PC-3 (cell line): ENCODE measurements at regions of chr4 and their contacts with region 1.

Region 1: GRCh38 chr4:129526814-129527213 is 430.9 kb downstream of the C4orf33 start:
- DNase-seq: peak; percentile 37
- ATAC-seq: peak; percentile 40; the same call in 1 of the 2 replicates
- H3K4me3 ChIP-seq: no peak overlapping the region
- H3K27ac ChIP-seq: no peak overlapping the region
- H3K4me1 ChIP-seq: no peaks in the 10 kb centered on the region
- H3K27me3 ChIP-seq: peaks cover 5% of the 10 kb centered on the region; the same call in 1 of the 2 replicates
- CTCF ChIP-seq: peak; percentile 50

Region 2: DNA sequence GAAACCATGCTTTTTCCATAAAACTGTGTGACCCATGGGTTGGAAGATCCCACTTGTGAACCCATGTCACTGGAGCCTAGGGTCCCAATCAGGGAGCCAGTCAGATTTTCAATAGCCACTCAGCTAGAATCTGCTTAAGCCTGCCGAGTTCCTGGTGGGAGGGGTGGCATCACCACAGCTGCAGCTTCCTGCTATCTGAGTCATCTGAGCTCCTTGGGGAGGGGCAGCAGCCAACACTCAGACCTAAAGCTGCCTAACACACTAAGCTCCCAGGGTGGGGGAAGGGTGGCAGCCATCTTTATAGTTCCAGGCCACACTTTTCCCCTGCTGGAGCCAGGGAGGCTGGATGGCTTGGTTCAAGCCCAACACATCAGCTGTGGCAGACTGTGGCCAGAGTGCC is 80.7 kb before region 1 on chr4:
- CTCF ChIA-PET with region 1: no interaction called
- POLR2A ChIA-PET with region 1: no interaction called
- intact Hi-C with region 1: no loop called
- DNase-seq: no peak
- ATAC-seq: no peak
- H3K4me3 ChIP-seq: no peak overlapping the region
- H3K27ac ChIP-seq: no peak overlapping the region
- H3K4me1 ChIP-seq: no peaks in the 10 kb centered on the region
- H3K27me3 ChIP-seq: no peaks in the 10 kb centered on the region
- CTCF ChIP-seq: no peak

Region 3: GRCh38 chr4:129641179-129641578 is 114.4 kb after region 1 on chr4:
- CTCF ChIA-PET with region 1: no interaction called
- POLR2A ChIA-PET with region 1: no interaction called
- intact Hi-C with region 1: loop called (anchors 2 kb)
- DNase-seq: peak; percentile 67
- ATAC-seq: peak; percentile 31; the same call in 1 of the 2 replicates
- H3K4me3 ChIP-seq: no peak overlapping the region
- H3K27ac ChIP-seq: no peak overlapping the region
- H3K4me1 ChIP-seq: no peaks in the 10 kb centered on the region
- H3K27me3 ChIP-seq: no peaks in the 10 kb centered on the region
- CTCF ChIP-seq: peak; percentile 75

Region 4: GRCh38 chr4:129929052-129929451 is 402.2 kb after region 1 on chr4:
- CTCF ChIA-PET with region 1: no interaction called
- POLR2A ChIA-PET with region 1: no interaction called
- intact Hi-C with region 1: loop called (anchors 5 kb)
- DNase-seq: peak; percentile 7
- ATAC-seq: no peak
- H3K4me3 ChIP-seq: no peak overlapping the region
- H3K27ac ChIP-seq: no peak overlapping the region
- H3K4me1 ChIP-seq: no peaks in the 10 kb centered on the region
- H3K27me3 ChIP-seq: no peaks in the 10 kb centered on the region
- CTCF ChIP-seq: peak; percentile 48

Region 5: GRCh38 chr4:130359542-130359941 is 832.7 kb after region 1 on chr4:
- CTCF ChIA-PET with region 1: no interaction called
- POLR2A ChIA-PET with region 1: no interaction called
- intact Hi-C with region 1: loop called (anchors 5 kb)
- DNase-seq: peak; percentile 35
- ATAC-seq: no peak; the same call in 1 of the 2 replicates
- H3K4me3 ChIP-seq: no peak overlapping the region
- H3K27ac ChIP-seq: no peak overlapping the region
- H3K4me1 ChIP-seq: no peaks in the 10 kb centered on the region
- H3K27me3 ChIP-seq: no peaks in the 10 kb centered on the region
- CTCF ChIP-seq: peak; percentile 61